ENCODE measurements at regions of chr4 and their contacts with region 1.

Region 1: GRCh38 chr4:169115897-169116254 is 105.8 kb upstream of the CBR4 start:
- DNase-seq: peak; percentile 87
- H3K4me3 Mint-ChIP-seq: peak overlapping the region; percentile 46
- H3K27ac Mint-ChIP-seq: peak overlapping the region; percentile 77
- H3K4me1 Mint-ChIP-seq: peaks cover 10% of the 10 kb centered on the region
- H3K27me3 Mint-ChIP-seq: no peaks in the 10 kb centered on the region
- CTCF ChIP-seq: no peak

Region 2: DNA sequence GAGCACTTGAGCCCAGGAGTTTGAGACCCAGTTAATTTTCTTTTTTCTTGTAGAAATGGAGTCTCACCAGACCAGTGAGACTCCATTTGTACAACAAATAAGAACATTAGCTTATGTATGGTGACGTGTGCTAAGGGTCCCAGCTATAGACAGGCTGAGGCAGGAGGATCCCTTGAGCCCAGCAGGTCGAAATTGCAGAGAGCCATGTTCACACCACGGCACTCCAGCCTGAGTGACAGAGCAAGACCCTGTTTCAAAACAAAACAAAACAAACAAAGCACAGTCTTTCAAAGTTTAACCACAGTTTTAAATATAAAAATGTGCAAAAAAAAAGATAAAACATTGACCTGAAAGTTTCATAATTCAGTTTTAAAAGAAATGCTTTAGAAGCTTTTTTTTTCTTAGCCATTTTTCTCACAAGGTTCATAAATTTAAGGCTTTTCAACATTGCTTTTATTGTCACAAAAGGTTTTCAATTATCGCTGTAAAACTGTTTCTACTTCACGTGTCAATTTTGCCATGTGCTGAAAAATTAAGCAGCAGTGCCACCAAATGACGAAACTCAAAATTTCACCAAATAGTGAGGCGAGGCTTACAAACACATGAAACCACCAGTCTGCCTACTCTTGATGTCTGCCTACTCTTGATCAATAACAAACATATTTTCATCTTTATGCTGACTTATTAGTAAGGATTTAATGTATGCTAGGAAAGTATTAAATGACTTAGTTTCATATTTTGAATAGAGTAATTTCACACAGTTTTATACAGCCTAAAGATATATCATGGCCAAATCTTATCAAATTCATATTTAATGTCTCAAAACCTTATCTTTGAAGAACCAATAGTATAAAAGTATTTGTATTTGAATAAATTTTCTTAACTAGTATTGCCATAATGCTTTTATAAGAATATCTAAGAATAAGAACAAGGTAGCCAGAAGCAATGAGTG is 370.2 kb after region 1 on chr4:
- CTCF ChIA-PET with region 1: interaction called, 5 read pairs
- POLR2A ChIA-PET with region 1: no interaction called
- intact Hi-C with region 1: loop called (anchors 1 kb)
- DNase-seq: peak; percentile 66
- H3K4me3 Mint-ChIP-seq: no peak overlapping the region
- H3K27ac Mint-ChIP-seq: peak overlapping the region; percentile 15
- H3K4me1 Mint-ChIP-seq: no peaks in the 10 kb centered on the region
- H3K27me3 Mint-ChIP-seq: no peaks in the 10 kb centered on the region
- CTCF ChIP-seq: peak; percentile 51

Measured in MCF 10A (cell line).